ENCODE measurements at regions of chr7 and their contacts with region 1.

Region 1: DNA sequence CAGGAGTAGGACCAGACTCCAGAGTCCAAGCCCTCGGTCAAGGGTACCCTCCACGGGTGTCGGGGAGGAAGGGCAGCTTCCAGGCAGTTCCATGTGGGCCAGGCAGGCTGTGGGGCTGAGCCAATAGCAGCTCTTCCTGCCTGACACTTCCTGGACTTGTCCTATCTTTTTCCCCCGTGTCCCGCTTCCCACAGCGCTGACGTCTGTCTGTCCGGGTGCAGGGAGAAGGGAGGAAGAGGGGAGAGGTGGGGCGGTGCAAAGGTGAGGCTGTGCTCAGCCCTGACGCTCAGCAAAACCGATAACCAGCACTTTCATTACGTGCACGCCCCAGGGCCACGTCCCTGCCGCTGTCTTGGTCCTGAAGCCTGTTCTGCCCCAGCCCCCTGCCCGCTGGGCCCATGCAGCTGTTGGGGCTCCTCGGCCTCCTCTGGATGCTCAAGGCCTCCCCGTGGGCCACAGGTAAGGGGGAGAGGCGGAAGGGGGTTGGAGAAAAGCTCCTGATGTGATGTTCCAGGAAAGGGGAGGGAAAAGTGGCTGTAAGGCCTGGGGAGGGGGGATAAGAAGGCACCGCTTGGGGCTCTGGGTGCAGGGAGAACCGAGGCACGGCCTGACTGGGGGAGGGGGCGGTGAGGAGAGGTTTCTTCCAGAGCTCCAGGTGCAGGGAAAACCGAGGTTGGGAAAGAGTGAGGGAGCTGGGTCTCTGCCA is at the start of gene MUC3A:
- DNase-seq: no peak
- ATAC-seq: no peak
- H3K4me3 ChIP-seq: no peak within 1 kb of the TSS
- H3K4me3 Mint-ChIP-seq: no peak within 1 kb of the TSS
- H3K27ac ChIP-seq: no peak within 1 kb of the TSS
- H3K27ac Mint-ChIP-seq: no peak within 1 kb of the TSS
- H3K4me1 ChIP-seq: no peaks in the 10 kb centered on the region
- H3K4me1 Mint-ChIP-seq: no peaks in the 10 kb centered on the region
- H3K27me3 ChIP-seq: no peaks in the 10 kb centered on the region
- H3K27me3 Mint-ChIP-seq: peaks cover 19 to 21% of the 10 kb centered on the region in 2 donors
- CTCF ChIP-seq: no peak
- total RNA-seq, gene MUC3A: 0.24 TPM in 1 of 3 donors, not detected in the others

Region 2: GRCh38 chr7:100975371-100975821 is 26.0 kb after region 1 on chr7:
- intact Hi-C with region 1: loop called (anchors 1 kb)
- DNase-seq: no peak
- ATAC-seq: no peak
- H3K4me3 ChIP-seq: no peak overlapping the region
- H3K4me3 Mint-ChIP-seq: no peak overlapping the region
- H3K27ac ChIP-seq: no peak overlapping the region
- H3K27ac Mint-ChIP-seq: no peak overlapping the region
- H3K4me1 ChIP-seq: no peaks in the 10 kb centered on the region
- H3K4me1 Mint-ChIP-seq: no peaks in the 10 kb centered on the region
- H3K27me3 ChIP-seq: no peaks in the 10 kb centered on the region
- H3K27me3 Mint-ChIP-seq: peaks cover 3 to 17% of the 10 kb centered on the region in 2 donors
- CTCF ChIP-seq: no peak

Measured in natural killer cell (primary cell).